ENCODE measurements at regions of chr1 and their contacts with region 1.

Region 1: GRCh38 chr1:44807262-44808062 is at the start of gene DYNLT4:
- DNase-seq: peak; percentile 97
- H3K4me3 Mint-ChIP-seq: peak within 1 kb of the TSS; percentile 76
- H3K27ac Mint-ChIP-seq: peak within 1 kb of the TSS; percentile 100
- H3K4me1 Mint-ChIP-seq: peaks cover 93% of the 10 kb centered on the region
- H3K27me3 Mint-ChIP-seq: no peaks in the 10 kb centered on the region
- total RNA-seq, gene DYNLT4: 0.62 to 0.67 TPM

Region 2: GRCh38 chr1:44819608-44820327 is 12.3 kb after region 1 on chr1:
- CTCF ChIA-PET with region 1: interaction called, 17 read pairs
- intact Hi-C with region 1: loop called (anchors 1 kb)
- DNase-seq: peak; percentile 86
- H3K4me3 Mint-ChIP-seq: peak overlapping the region; percentile 88
- H3K27ac Mint-ChIP-seq: peak overlapping the region; percentile 99
- H3K4me1 Mint-ChIP-seq: peaks cover 34% of the 10 kb centered on the region
- H3K27me3 Mint-ChIP-seq: no peaks in the 10 kb centered on the region

Region 3: DNA sequence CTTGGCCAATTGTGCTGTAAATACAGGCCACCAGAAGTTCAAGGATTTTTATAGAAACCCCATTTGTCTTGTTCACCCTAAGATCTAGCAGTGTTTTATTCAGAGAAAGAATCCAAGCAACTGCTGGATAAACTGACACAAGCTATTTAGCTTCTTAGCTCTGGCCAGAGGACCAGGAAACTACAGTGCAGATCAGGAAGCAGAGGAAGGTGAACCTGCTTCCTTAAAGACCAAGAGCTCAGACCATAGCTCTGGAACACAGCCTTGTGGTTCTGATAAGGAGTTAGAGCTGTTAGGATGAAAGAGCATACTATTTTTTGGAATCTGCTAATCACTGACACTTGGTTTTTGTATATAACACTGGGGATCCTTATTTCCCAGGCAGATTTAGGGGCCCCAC is 821.6 kb after region 1 on chr1:
- CTCF ChIA-PET with region 1: no interaction called
- intact Hi-C with region 1: no loop called
- DNase-seq: no peak
- H3K4me3 Mint-ChIP-seq: no peak overlapping the region
- H3K27ac Mint-ChIP-seq: no peak overlapping the region
- H3K4me1 Mint-ChIP-seq: no peaks in the 10 kb centered on the region
- H3K27me3 Mint-ChIP-seq: no peaks in the 10 kb centered on the region

Measured in activated naive CD4-positive, alpha-beta T cell treated with anti-CD3 and anti-CD28 coated beads for 36 hours (primary cell).